B cell (primary cell): ENCODE measurements at regions of chr15 and their contacts with region 1.

Region 1: GRCh38 chr15:76235186-76235826 is 76.0 kb downstream of the ETFA start:
- DNase-seq: peak; percentile 45
- ATAC-seq: peak; percentile 21
- H3K4me3 ChIP-seq: no peak overlapping the region
- H3K4me3 Mint-ChIP-seq: no peak overlapping the region
- H3K27ac ChIP-seq: no peak overlapping the region
- H3K27ac Mint-ChIP-seq: no peak overlapping the region
- H3K4me1 ChIP-seq: no peaks in the 10 kb centered on the region
- H3K4me1 Mint-ChIP-seq: no peaks in the 10 kb centered on the region
- H3K27me3 ChIP-seq: no peaks in the 10 kb centered on the region
- H3K27me3 Mint-ChIP-seq: no peaks in the 10 kb centered on the region
- CTCF ChIP-seq: peak; percentile 65

Region 2: GRCh38 chr15:76206325-76206976 is 28.9 kb before region 1 on chr15:
- CTCF ChIA-PET with region 1: no interaction called
- POLR2A ChIA-PET with region 1: no interaction called
- intact Hi-C with region 1: no loop called
- DNase-seq: no peak
- ATAC-seq: no peak
- H3K4me3 ChIP-seq: no peak overlapping the region
- H3K4me3 Mint-ChIP-seq: no peak overlapping the region
- H3K27ac ChIP-seq: no peak overlapping the region
- H3K27ac Mint-ChIP-seq: no peak overlapping the region
- H3K4me1 ChIP-seq: no peaks in the 10 kb centered on the region
- H3K4me1 Mint-ChIP-seq: no peaks in the 10 kb centered on the region
- H3K27me3 ChIP-seq: no peaks in the 10 kb centered on the region
- H3K27me3 Mint-ChIP-seq: no peaks in the 10 kb centered on the region
- CTCF ChIP-seq: no peak

Region 3: DNA sequence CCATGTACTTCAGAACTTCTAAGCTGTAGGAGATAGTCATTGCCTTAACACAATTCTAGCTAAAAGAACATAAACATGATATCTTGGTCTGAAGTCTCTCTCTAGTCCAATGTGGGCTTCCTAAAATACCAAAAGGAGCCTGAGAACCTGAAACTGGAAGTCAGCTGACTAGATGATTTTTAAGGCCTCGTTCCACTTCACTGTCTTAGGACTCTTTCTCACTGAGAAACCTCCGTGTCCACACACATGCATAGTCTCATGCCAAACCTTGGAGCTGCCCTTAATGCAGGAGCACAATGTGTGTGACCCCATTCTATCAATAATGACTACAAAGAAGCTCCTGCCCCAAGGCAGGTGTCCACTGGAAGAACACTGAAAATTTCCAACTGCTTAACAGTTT is 11.8 kb before region 1 on chr15:
- CTCF ChIA-PET with region 1: interaction called, 13 read pairs
- POLR2A ChIA-PET with region 1: no interaction called
- intact Hi-C with region 1: no loop called
- DNase-seq: no peak
- ATAC-seq: no peak
- H3K4me3 ChIP-seq: no peak overlapping the region
- H3K4me3 Mint-ChIP-seq: no peak overlapping the region
- H3K27ac ChIP-seq: no peak overlapping the region
- H3K27ac Mint-ChIP-seq: no peak overlapping the region
- H3K4me1 ChIP-seq: no peaks in the 10 kb centered on the region
- H3K4me1 Mint-ChIP-seq: no peaks in the 10 kb centered on the region
- H3K27me3 ChIP-seq: no peaks in the 10 kb centered on the region
- H3K27me3 Mint-ChIP-seq: no peaks in the 10 kb centered on the region
- CTCF ChIP-seq: no peak

Region 4: DNA sequence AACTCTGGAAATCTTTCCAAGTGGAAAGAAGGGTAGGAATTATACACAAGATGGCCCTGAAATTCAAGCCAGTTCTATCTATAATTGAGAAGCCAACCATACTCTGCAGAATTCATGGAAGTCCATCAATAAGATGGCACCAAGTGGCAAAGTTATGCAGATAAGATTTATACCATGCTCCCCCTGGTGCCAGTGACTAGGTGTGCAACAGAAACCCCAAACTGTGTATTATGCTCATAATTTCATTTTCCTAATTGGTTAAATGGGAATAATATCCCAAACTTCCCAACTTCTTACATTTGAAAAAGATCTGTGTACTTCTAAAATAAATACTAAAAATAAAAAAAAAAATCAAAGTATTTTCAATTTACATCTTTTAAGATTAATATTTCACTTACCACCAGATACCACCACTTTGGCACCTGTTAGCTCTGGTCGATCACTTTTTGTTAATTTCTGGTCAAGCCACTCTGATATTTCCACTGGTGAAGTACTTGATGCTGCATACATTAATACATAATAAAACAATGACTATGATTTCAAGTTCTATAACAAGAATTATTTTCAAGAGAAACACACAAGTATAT is 50.0 kb after region 1 on chr15:
- CTCF ChIA-PET with region 1: interaction called, 3 read pairs
- POLR2A ChIA-PET with region 1: no interaction called
- intact Hi-C with region 1: loop called (anchors 10 kb)
- DNase-seq: no peak
- ATAC-seq: no peak
- H3K4me3 ChIP-seq: no peak overlapping the region
- H3K4me3 Mint-ChIP-seq: no peak overlapping the region
- H3K27ac ChIP-seq: no peak overlapping the region
- H3K27ac Mint-ChIP-seq: no peak overlapping the region
- H3K4me1 ChIP-seq: peaks cover 0 to 7% of the 10 kb centered on the region in 2 donors
- H3K4me1 Mint-ChIP-seq: peaks cover 9% of the 10 kb centered on the region
- H3K27me3 ChIP-seq: no peaks in the 10 kb centered on the region
- H3K27me3 Mint-ChIP-seq: no peaks in the 10 kb centered on the region
- CTCF ChIP-seq: peak; percentile 61

Region 5: GRCh38 chr15:76336254-76337058 is 101.2 kb after region 1 on chr15 and contains the start of gene ISL2:
- CTCF ChIA-PET with region 1: interaction called, 6 read pairs
- POLR2A ChIA-PET with region 1: no interaction called
- intact Hi-C with region 1: loop called (anchors 2 kb)
- DNase-seq: peak; percentile 74
- ATAC-seq: peak; percentile 40
- H3K4me3 ChIP-seq: peak within 1 kb of the TSS; percentile 12 to 60 (median 40)
- H3K4me3 Mint-ChIP-seq: peak within 1 kb of the TSS; percentile 87
- H3K27ac ChIP-seq: no peak within 1 kb of the TSS
- H3K27ac Mint-ChIP-seq: peak within 1 kb of the TSS; percentile 69
- H3K4me1 ChIP-seq: peaks cover 65 to 66% of the 10 kb centered on the region in 2 donors
- H3K4me1 Mint-ChIP-seq: peaks cover 56% of the 10 kb centered on the region
- H3K27me3 ChIP-seq: peaks cover 0 to 88% (median 61%) of the 10 kb centered on the region in 4 experiments
- H3K27me3 Mint-ChIP-seq: peaks cover 58% of the 10 kb centered on the region
- CTCF ChIP-seq: no peak
- total RNA-seq, gene ISL2: 0.22 and 0.59 TPM in 2 replicates

Region 6: GRCh38 chr15:76418369-76419140 is 183.2 kb after region 1 on chr15:
- CTCF ChIA-PET with region 1: no interaction called
- POLR2A ChIA-PET with region 1: no interaction called
- intact Hi-C with region 1: no loop called
- DNase-seq: no peak
- ATAC-seq: no peak
- H3K4me3 ChIP-seq: no peak overlapping the region
- H3K4me3 Mint-ChIP-seq: no peak overlapping the region
- H3K27ac ChIP-seq: no peak overlapping the region
- H3K27ac Mint-ChIP-seq: no peak overlapping the region
- H3K4me1 ChIP-seq: no peaks in the 10 kb centered on the region
- H3K4me1 Mint-ChIP-seq: no peaks in the 10 kb centered on the region
- H3K27me3 ChIP-seq: no peaks in the 10 kb centered on the region
- H3K27me3 Mint-ChIP-seq: no peaks in the 10 kb centered on the region
- CTCF ChIP-seq: no peak

Region 7: GRCh38 chr15:76866716-76867321 is 631.5 kb after region 1 on chr15:
- CTCF ChIA-PET with region 1: interaction called, 5 read pairs
- POLR2A ChIA-PET with region 1: no interaction called
- intact Hi-C with region 1: loop called (anchors 10 kb)
- DNase-seq: no peak
- ATAC-seq: no peak
- H3K4me3 ChIP-seq: no peak overlapping the region
- H3K4me3 Mint-ChIP-seq: no peak overlapping the region
- H3K27ac ChIP-seq: no peak overlapping the region
- H3K27ac Mint-ChIP-seq: no peak overlapping the region
- H3K4me1 ChIP-seq: no peaks in the 10 kb centered on the region
- H3K4me1 Mint-ChIP-seq: peaks cover 7% of the 10 kb centered on the region
- H3K27me3 ChIP-seq: no peaks in the 10 kb centered on the region
- H3K27me3 Mint-ChIP-seq: no peaks in the 10 kb centered on the region
- CTCF ChIP-seq: peak; percentile 30